Aorta (tissue), 5 donors: ENCODE measurements at regions of chr14 and their contacts with region 1.

Region 1: GRCh38 chr14:63852817-63853731 is at the start of gene SYNE2:
- DNase-seq: peak; percentile 82 to 94
- ATAC-seq: peak; percentile 93
- H3K4me3 ChIP-seq: peak within 1 kb of the TSS; percentile 98
- H3K27ac ChIP-seq: peak within 1 kb of the TSS; percentile 50 to 71
- H3K4me1 ChIP-seq: peaks cover 0 to 6% of the 10 kb centered on the region in 2 donors
- H3K27me3 ChIP-seq: no peaks in the 10 kb centered on the region
- total RNA-seq, gene SYNE2: 168 to 197 TPM

Region 2: DNA sequence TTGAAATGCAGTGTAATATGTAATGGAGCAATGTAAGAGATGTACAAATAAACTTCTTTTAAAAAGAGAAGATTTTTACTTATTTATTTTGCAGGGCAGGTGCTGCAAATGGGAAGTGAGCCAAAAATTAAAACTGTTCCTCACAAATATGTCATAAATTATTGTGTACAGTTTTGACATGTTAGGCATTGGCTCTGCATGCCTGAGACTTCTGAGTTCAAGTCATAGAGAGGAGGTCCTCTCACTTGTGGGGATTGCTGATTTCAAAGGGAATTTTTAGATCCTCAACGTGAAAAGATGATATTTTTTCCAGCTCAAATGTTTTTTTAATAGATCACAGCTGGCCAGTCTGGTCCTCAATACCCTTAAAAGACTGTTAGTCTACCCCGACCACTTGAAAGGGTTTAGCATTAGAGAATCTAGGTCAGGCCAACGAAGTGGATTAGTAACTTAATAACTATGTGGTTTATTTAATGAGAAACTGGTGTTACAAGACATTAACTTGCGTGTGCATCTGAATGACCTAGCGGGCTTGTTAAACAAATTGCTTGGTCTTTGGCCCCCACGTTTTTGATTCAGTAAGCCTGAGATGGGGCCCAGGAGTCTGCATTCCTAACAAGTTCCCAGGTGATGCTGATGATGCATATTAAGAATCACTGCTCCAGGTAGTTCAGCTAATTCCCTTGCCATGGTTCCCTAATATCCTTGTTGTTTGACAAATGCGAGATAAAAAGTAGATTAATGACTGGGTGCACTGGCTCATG is 180.5 kb before region 1 on chr14:
- intact Hi-C with region 1: no loop called
- DNase-seq: no peak
- ATAC-seq: no peak
- H3K4me3 ChIP-seq: no peak overlapping the region
- H3K27ac ChIP-seq: no peak overlapping the region
- H3K4me1 ChIP-seq: no peaks in the 10 kb centered on the region
- H3K27me3 ChIP-seq: no peaks in the 10 kb centered on the region

Region 3: DNA sequence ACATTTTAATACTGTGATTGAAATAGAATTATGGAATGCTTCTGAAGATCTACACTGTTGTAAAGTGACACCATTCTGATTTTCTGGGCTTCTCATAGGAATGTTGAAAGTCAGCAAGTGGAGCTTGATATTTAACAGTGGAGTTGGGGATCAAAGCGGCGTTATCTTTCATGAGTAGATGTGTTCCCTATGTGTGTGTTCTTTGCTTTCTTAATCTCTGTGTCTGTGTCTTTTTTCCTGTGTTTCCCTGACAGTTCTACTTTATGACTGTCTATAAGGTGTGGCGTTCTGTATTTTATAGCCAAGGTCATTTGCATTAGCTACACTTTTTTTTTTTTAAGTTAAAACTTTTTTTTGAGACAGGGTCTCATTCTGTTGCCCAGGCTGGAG is 24.5 kb after region 1 on chr14:
- intact Hi-C with region 1: loop called in 1 of 2 experiments (anchors 2 kb)
- DNase-seq: no peak
- ATAC-seq: no peak
- H3K4me3 ChIP-seq: no peak overlapping the region
- H3K27ac ChIP-seq: peak overlapping the region in 1 of 2 donors; percentile 78
- H3K4me1 ChIP-seq: peaks cover 4 to 8% of the 10 kb centered on the region in 2 donors
- H3K27me3 ChIP-seq: no peaks in the 10 kb centered on the region

Region 4: DNA sequence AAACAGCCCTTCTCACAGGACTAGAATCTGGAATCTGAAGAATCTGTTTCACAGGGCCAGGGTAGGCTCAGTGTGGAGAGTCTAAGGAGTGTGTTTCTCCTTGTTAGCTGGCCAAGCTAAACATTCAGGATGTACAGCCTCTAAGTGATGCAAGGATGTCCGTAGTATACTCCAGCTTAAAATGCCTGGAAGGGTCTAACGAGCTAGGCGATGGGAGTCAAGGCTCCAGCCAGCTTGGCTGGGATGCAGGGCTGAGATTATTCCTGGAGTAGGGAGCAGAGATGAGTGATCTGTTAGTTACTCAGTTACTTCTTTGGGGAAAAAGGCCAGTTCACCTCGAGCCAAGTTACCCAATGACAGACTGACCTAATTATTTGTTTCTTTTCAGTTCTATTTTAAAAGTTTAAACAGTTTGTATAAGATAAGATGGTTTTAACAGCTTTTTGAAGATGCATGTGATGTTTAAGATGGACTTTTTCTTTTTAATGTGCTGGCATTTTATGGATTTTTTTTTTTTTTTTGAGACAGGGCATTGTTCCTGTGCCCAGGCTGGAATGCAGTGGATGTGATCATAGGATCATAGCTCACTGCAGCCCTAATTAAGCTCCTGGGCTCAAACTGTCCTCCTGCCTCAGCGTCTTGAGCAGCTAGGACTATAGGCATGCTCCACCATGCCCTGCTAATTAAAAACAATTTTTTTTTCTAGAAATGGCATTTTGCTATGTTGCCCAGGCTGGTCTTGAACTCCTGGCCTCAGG is 40.8 kb after region 1 on chr14:
- intact Hi-C with region 1: loop called in 1 of 2 experiments (anchors 5 kb)
- DNase-seq: peak; percentile 84 to 88
- ATAC-seq: peak; percentile 86
- H3K4me3 ChIP-seq: no peak overlapping the region
- H3K27ac ChIP-seq: peak overlapping the region in 1 of 2 donors; percentile 77
- H3K4me1 ChIP-seq: peaks cover 9 to 14% of the 10 kb centered on the region in 2 donors
- H3K27me3 ChIP-seq: no peaks in the 10 kb centered on the region